ENCODE measurements at regions of chr17 and their contacts with region 1.

Region 1: GRCh38 chr17:65556014-65556909 is 5.2 kb downstream of the AXIN2 start:
- DNase-seq: peak; percentile 80 to 95
- ATAC-seq: no peak
- H3K4me3 ChIP-seq: peak overlapping the region in 1 of 2 donors; percentile 14
- H3K27ac ChIP-seq: no peak overlapping the region
- H3K4me1 ChIP-seq: peaks cover 2 to 3% of the 10 kb centered on the region in 2 donors
- H3K27me3 ChIP-seq: no peaks in the 10 kb centered on the region

Region 2: GRCh38 chr17:65455972-65456343 is 100.3 kb before region 1 on chr17:
- intact Hi-C with region 1: loop called in 1 of 2 experiments (anchors 5 kb)
- DNase-seq: no peak
- ATAC-seq: no peak
- H3K4me3 ChIP-seq: no peak overlapping the region
- H3K27ac ChIP-seq: no peak overlapping the region
- H3K4me1 ChIP-seq: no peaks in the 10 kb centered on the region
- H3K27me3 ChIP-seq: no peaks in the 10 kb centered on the region

Region 3: GRCh38 chr17:65472415-65473309 is 83.6 kb before region 1 on chr17:
- intact Hi-C with region 1: loop called (anchors 5 kb)
- DNase-seq: peak; percentile 72 to 84
- ATAC-seq: peak; percentile 81
- H3K4me3 ChIP-seq: no peak overlapping the region
- H3K27ac ChIP-seq: peak overlapping the region; percentile 93 to 99
- H3K4me1 ChIP-seq: peaks cover 0 to 2% of the 10 kb centered on the region in 2 donors
- H3K27me3 ChIP-seq: no peaks in the 10 kb centered on the region

Region 4: GRCh38 chr17:65523853-65524664 is 32.2 kb before region 1 on chr17:
- intact Hi-C with region 1: no loop called
- DNase-seq: no peak
- ATAC-seq: no peak
- H3K4me3 ChIP-seq: no peak overlapping the region
- H3K27ac ChIP-seq: no peak overlapping the region
- H3K4me1 ChIP-seq: no peaks in the 10 kb centered on the region
- H3K27me3 ChIP-seq: no peaks in the 10 kb centered on the region

Region 5: GRCh38 chr17:65785109-65785508 is 228.8 kb after region 1 on chr17:
- intact Hi-C with region 1: loop called (anchors 5 kb)
- DNase-seq: no peak
- ATAC-seq: peak; percentile 84
- H3K4me3 ChIP-seq: no peak overlapping the region
- H3K27ac ChIP-seq: no peak overlapping the region
- H3K4me1 ChIP-seq: peaks cover 0 to 4% of the 10 kb centered on the region in 2 donors
- H3K27me3 ChIP-seq: no peaks in the 10 kb centered on the region